Ascending aorta (tissue), 2 donors: ENCODE measurements at regions of chr4 and their contacts with region 1.

Region 1: GRCh38 chr4:127782274-127783025 is at the start of gene HSPA4L:
- DNase-seq: peak; percentile 23 to 76
- H3K4me3 ChIP-seq: peak within 1 kb of the TSS; percentile 81 to 86
- H3K27ac ChIP-seq: peak within 1 kb of the TSS; percentile 80 to 89
- H3K4me1 ChIP-seq: no peaks in the 10 kb centered on the region
- H3K27me3 ChIP-seq: no peaks in the 10 kb centered on the region
- CTCF ChIP-seq: peak; percentile 33 to 41 (median 33)
- total RNA-seq, gene HSPA4L: 5.5 TPM

Region 2: DNA sequence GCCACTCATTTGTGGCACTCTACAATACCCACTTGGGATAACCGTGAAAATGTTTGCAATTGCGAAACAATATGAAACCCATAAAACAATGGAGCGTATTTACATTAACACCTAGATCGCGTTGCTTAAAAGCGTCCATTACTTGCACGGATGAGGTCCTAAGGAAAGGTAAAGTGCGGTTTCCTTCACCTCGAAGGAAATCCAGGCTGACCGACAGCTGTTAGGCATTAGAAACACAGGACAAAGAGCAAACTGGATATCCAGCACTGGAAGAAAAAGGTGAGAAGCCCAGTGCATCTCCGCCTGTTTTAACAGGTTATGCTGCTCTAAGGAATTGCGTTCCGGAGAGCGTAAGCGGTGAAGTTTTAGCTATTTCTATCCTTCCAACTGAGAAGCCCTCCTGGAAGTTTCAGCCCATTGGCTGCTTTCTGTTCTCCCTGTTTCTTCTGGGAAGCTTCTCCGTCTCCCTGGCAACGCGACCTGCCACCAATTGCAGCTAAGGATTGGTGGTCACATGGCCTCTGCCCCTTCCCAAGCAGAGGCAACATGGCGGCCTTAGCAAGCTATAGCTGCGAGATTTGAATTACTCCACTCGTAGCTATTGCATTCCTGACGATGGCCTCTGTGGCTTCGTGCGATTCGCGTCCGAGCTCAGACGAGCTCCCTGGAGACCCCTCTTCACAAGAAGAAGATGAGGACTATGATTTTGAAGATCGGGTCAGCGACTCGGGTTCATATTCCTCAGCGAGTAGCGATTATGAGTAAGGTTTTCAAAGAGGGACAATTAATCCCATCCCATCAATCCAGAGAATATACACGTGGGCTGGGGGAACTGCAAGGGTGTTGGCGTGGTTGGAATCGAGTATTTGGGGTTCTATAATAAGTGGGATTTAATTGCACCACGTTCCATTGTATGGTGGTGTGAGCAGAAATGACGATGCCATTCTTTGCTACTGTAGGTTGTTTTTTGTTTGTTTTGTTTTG is 149.7 kb before region 1 on chr4 and contains the start of gene INTU:
- intact Hi-C with region 1: loop called (anchors 2 kb)
- DNase-seq: peak; percentile 87 to 97
- H3K4me3 ChIP-seq: peak within 1 kb of the TSS; percentile 60 to 79
- H3K27ac ChIP-seq: peak within 1 kb of the TSS; percentile 29 to 46
- H3K4me1 ChIP-seq: peaks cover 0 to 3% of the 10 kb centered on the region in 2 donors
- H3K27me3 ChIP-seq: no peaks in the 10 kb centered on the region
- CTCF ChIP-seq: no peak
- total RNA-seq, gene INTU: 3.1 TPM

Region 3: DNA sequence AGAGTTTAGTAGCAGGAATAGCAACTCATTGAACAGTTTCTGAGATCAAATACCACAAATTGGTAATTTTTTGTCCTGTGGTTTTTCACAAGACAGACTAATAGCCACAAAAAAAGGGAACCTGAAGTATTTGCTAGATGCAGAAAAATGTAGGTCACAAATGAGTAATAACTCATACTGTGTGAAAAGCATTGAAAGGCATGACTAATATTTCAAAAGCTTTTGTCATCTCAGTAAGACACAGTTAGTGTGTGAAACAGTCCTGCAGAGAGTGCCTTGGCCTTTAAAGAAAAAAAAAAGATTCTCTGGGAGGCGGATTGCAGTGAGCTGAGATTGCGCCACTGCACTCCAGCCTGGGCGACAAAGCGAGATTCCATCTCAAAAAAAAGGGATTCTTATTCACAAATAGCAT is 83.7 kb before region 1 on chr4:
- intact Hi-C with region 1: no loop called
- DNase-seq: no peak
- H3K4me3 ChIP-seq: no peak overlapping the region
- H3K27ac ChIP-seq: no peak overlapping the region
- H3K4me1 ChIP-seq: no peaks in the 10 kb centered on the region
- H3K27me3 ChIP-seq: no peaks in the 10 kb centered on the region
- CTCF ChIP-seq: no peak

Region 4: GRCh38 chr4:127880764-127881562 is 98.5 kb after region 1 on chr4 and contains the start of gene PLK4:
- intact Hi-C with region 1: loop called (anchors 5 kb)
- DNase-seq: peak; percentile 84 to 96
- H3K4me3 ChIP-seq: peak within 1 kb of the TSS; percentile 79 to 85
- H3K27ac ChIP-seq: peak within 1 kb of the TSS; percentile 70 to 72
- H3K4me1 ChIP-seq: peaks cover 0 to 4% of the 10 kb centered on the region in 2 donors
- H3K27me3 ChIP-seq: no peaks in the 10 kb centered on the region
- CTCF ChIP-seq: no peak
- total RNA-seq, gene PLK4: not detected

Region 5: GRCh38 chr4:127917151-127917550 is 134.7 kb after region 1 on chr4:
- intact Hi-C with region 1: no loop called
- DNase-seq: no peak
- H3K4me3 ChIP-seq: no peak overlapping the region
- H3K27ac ChIP-seq: no peak overlapping the region
- H3K4me1 ChIP-seq: no peaks in the 10 kb centered on the region
- H3K27me3 ChIP-seq: no peaks in the 10 kb centered on the region
- CTCF ChIP-seq: no peak

Region 6: GRCh38 chr4:127965062-127965802 is 182.8 kb after region 1 on chr4 and contains the starts of genes ABHD18 and MFSD8:
- intact Hi-C with region 1: loop called (anchors 2 kb)
- DNase-seq: peak; percentile 98 to 99
- H3K4me3 ChIP-seq: peak within 1 kb of the TSS; percentile 71 to 86
- H3K27ac ChIP-seq: peak within 1 kb of the TSS; percentile 93 to 94
- H3K4me1 ChIP-seq: peaks cover 0 to 12% of the 10 kb centered on the region in 2 donors
- H3K27me3 ChIP-seq: no peaks in the 10 kb centered on the region
- CTCF ChIP-seq: peak; percentile 39 to 55 (median 46)
- total RNA-seq, gene ABHD18: 3.5 TPM
- total RNA-seq, gene MFSD8: 26.3 TPM

Region 7: DNA sequence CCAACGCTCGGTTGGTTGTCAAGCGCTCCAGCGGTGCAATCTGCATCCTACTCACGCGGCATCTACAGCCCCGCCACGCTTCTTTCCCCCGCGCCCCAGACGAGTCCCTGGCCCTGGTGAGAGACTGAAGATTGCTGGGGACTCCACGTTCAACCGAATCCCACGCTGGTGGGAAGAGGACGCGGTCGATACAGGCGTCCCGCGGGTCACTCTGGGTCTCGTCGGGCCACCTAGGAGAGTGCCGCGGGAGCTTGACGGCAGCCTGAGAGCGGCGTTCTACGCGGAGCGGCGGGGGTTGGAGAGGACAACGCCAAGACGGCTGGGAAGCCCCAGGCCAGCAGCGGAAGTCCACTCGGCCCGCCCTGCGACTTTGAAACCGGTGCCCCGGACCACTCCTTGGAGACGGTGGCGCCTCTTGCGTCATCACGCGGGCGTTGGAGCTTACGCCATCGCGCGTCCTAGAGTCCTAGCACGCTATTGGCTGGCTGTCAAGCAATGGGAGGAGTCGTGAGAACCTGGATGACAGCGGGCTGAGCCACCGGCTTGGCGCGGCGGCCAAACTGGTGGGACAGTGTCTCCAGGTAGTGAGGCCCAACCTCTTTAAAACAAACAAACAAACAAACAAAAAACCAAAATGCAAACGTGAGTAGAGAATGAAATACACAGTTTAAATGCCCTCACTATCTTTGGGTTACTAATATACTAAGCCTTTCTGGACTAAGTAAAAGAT is 1310.9 kb after region 1 on chr4 and contains the start of gene SCLT1:
- intact Hi-C with region 1: loop called (anchors 10 kb)
- DNase-seq: peak; percentile 92 to 99
- H3K4me3 ChIP-seq: peak within 1 kb of the TSS; percentile 74 to 75
- H3K27ac ChIP-seq: peak within 1 kb of the TSS; percentile 91 to 92
- H3K4me1 ChIP-seq: peaks cover 0 to 14% of the 10 kb centered on the region in 2 donors
- H3K27me3 ChIP-seq: no peaks in the 10 kb centered on the region
- CTCF ChIP-seq: no peak
- total RNA-seq, gene SCLT1: 7.0 TPM